ENCODE measurements at regions of chr12 and their contacts with region 1.

Region 1: GRCh38 chr12:14854586-14855183 is 11.4 kb upstream of the ART4 start:
- DNase-seq: no peak
- H3K4me3 ChIP-seq: no peak overlapping the region
- H3K27ac ChIP-seq: no peak overlapping the region
- H3K4me1 ChIP-seq: peaks cover 0 to 4% (median 0%) of the 10 kb centered on the region in 4 donors
- H3K27me3 ChIP-seq: no peaks in the 10 kb centered on the region
- CTCF ChIP-seq: no peak
- EP300 ChIP-seq: no peak
- POLR2A ChIP-seq: no peak

Region 2: GRCh38 chr12:14691560-14691959 is 163.1 kb before region 1 on chr12:
- in situ Hi-C with region 1: no loop called
- intact Hi-C with region 1: no loop called
- DNase-seq: peak; percentile 49
- H3K4me3 ChIP-seq: no peak overlapping the region
- H3K27ac ChIP-seq: no peak overlapping the region
- H3K4me1 ChIP-seq: peaks cover 0 to 10% (median 4%) of the 10 kb centered on the region in 4 donors
- H3K27me3 ChIP-seq: no peaks in the 10 kb centered on the region
- CTCF ChIP-seq: no peak
- EP300 ChIP-seq: no peak
- POLR2A ChIP-seq: no peak

Region 3: DNA sequence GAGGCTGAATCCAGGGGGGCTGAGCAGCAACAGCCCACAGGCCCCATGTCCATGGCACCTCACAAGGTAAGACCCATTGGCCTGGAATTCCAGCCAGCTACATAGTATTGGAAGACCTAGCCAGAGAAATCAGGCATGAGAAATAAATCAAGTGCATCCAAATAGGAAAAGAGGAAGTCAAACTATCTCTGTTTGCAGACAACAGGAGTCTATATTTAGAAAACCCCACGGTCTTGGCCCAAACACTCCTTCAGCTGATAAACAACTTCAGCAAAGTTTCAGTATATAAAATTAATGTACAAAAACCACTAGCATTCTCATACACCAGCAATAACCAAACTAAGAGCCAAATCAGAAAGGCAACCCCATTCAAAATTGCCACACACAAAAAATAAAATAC is 135.1 kb after region 1 on chr12:
- in situ Hi-C with region 1: no loop called
- intact Hi-C with region 1: loop called (anchors 5 kb)
- DNase-seq: no peak
- H3K4me3 ChIP-seq: no peak overlapping the region
- H3K27ac ChIP-seq: no peak overlapping the region
- H3K4me1 ChIP-seq: no peaks in the 10 kb centered on the region
- H3K27me3 ChIP-seq: no peaks in the 10 kb centered on the region
- CTCF ChIP-seq: no peak
- EP300 ChIP-seq: no peak
- POLR2A ChIP-seq: no peak

Region 4: GRCh38 chr12:16385782-16386646 is 1531.3 kb after region 1 on chr12:
- in situ Hi-C with region 1: no loop called
- intact Hi-C with region 1: no loop called
- DNase-seq: peak; percentile 23
- H3K4me3 ChIP-seq: no peak overlapping the region
- H3K27ac ChIP-seq: peak overlapping the region in 2 of 4 donors; percentile 13 to 34
- H3K4me1 ChIP-seq: peaks cover 5 to 9% (median 7%) of the 10 kb centered on the region in 4 donors
- H3K27me3 ChIP-seq: no peaks in the 10 kb centered on the region
- CTCF ChIP-seq: peak in 4 of 5 experiments; percentile 27 to 40 (median 35)
- EP300 ChIP-seq: no peak
- POLR2A ChIP-seq: no peak

Measured in transverse colon (tissue), 4 donors.